ENCODE measurements at regions of chr1 and their contacts with region 1.

Region 1: DNA sequence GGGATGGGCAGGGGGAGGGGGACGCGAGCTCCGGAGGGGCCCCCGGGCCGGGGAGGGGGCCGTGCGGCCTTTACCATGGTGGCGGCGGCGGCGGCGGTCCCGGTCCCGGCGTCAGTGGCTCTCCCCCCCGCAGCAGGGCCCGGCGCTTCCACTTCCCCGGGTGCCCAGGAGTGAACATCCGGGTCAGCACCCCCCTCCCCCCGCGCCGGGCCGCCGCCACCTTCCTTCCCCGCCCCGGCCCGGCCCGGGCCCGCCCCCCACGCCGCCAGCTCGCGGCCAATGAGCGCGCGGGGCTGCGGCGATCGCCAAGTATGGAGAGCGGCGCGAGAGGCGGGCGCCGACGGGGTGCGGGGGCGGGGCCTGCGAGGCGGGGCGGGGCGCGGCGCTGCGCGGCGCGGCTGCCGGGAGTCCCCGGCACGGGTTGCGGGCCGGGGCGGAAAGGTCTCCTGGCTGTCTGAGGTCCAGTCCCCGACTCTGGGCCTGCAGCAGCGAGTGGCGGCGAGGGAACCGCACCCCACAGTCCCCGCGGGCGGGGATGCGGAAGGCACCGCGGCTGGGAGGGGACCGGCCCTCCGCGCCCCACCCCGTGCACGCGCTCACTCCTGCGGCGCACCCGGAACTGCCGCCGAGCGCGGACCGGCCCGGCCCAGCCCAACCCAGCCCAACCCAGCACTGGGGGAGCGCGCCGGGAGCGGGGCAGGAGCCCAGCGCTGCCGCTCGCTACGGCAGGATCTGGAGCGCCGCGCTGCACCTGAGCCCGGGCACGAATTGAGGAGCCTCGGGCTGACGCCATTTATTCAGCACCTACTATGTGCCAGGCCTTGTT is at the start of gene CAPZB:
- DNase-seq: no peak
- H3K4me3 ChIP-seq: peak within 1 kb of the TSS; percentile 70 to 100
- H3K27ac ChIP-seq: peak within 1 kb of the TSS; percentile 97
- H3K4me1 ChIP-seq: peaks cover 61% of the 10 kb centered on the region
- H3K27me3 ChIP-seq: no peaks in the 10 kb centered on the region
- CTCF ChIP-seq: no peak
- POLR2A ChIP-seq: peak in 1 of 2 donors; percentile 78
- total RNA-seq, gene CAPZB: 152 TPM

Region 2: DNA sequence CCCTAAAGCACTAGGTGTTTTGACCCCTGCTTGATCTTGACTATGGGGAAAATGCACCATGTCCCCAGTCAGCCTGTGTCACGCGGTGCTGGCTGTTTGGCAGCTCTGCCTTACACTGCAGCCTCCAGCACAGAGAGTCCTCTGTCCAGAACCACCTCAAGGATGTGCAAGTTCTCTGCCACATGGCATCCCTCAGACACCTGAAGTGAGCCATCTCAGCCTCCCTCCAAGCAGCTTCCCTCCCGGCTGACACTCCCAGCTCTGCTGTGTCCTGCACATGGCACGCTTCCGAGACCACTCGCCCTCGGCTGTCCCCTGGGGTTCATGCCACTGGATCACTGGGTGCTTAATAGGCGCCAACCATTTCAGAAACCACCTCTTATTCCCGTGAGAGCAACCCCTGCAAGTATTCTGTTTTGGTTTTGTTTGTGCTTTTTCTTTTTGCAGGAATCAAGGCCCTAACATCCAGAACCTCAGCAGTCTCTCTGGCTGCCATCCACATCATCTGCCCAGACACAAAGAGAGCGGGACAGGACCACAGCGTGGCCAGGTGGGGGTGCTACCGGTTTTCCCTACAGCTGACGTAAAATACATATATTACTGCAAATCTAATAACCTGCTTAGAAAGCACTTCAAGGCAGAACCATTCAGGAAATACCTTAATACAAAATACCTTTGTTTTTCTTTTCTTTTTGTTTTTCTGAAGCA is 46.0 kb before region 1 on chr1:
- intact Hi-C with region 1: loop called (anchors 10 kb)
- DNase-seq: no peak
- H3K4me3 ChIP-seq: no peak overlapping the region
- H3K27ac ChIP-seq: peak overlapping the region; percentile 86
- H3K4me1 ChIP-seq: peaks cover 100% of the 10 kb centered on the region
- H3K27me3 ChIP-seq: no peaks in the 10 kb centered on the region
- CTCF ChIP-seq: no peak
- POLR2A ChIP-seq: no peak

Measured in vagina (tissue), 2 donors.